Ovary (tissue), 10 donors: ENCODE measurements at regions of chr16 and their contacts with region 1.

Region 1: GRCh38 chr16:2500918-2501750 is 12.6 kb upstream of the ATP6V0C start:
- DNase-seq: peak; percentile 82 to 93 (median 87)
- H3K4me3 ChIP-seq: peak overlapping the region; percentile 1
- H3K27ac ChIP-seq: peak overlapping the region in 1 of 2 donors; percentile 73
- H3K4me1 ChIP-seq: peaks cover 5% of the 10 kb centered on the region
- H3K27me3 ChIP-seq: no peaks in the 10 kb centered on the region
- CTCF ChIP-seq: peak; percentile 98
- EP300 ChIP-seq: no peak
- POLR2A ChIP-seq: no peak

Region 2: DNA sequence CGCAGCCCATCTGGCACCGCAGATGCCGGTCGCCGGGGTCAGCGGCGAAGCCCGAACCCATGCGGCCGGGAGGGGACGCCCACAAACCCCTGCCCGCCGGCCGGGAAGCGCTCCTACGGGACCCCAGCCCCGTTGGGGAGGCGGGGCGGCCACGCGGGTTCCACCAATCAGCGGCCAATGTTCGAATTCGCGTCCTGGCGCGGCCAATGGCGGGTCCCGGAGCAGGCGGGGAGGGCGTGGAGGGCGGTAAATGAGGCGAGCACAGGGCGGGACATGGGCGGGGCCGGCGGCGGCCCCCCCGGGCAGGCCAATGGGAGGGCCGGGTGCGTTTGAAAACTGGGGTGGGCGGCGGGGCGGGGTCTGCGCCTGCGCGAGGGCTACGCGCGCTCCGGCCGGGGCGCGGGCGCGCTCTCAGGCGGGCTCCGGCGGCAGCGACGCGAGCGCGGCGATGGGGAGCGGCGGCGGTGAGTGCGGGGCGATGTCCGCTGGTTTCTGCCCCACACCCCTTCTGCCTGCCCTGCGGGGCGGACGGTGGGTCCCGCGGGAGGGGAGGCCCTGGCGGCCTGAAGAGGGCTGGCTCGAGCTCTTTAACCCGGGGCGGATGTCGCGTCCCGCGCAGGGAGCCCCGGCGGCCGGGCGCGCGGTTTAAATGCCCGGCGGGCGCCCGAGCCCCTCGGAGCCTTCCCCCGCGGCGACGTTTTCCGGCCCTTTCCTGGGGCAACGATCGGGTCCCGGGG is 71.9 kb before region 1 on chr16 and contains the start of gene CCNF:
- intact Hi-C with region 1: loop called in 2 of 4 experiments (anchors 10 kb)
- DNase-seq: peak; percentile 97 to 99 (median 98)
- H3K4me3 ChIP-seq: peak within 1 kb of the TSS; percentile 61
- H3K27ac ChIP-seq: peak within 1 kb of the TSS; percentile 57 to 89
- H3K4me1 ChIP-seq: peaks cover 2% of the 10 kb centered on the region
- H3K27me3 ChIP-seq: no peaks in the 10 kb centered on the region
- CTCF ChIP-seq: peak in 2 of 3 donors; percentile 16 to 29
- EP300 ChIP-seq: no peak
- POLR2A ChIP-seq: peak; percentile 86
- total RNA-seq, gene CCNF: 1.4 to 2.5 (median 2.0) TPM

Region 3: GRCh38 chr16:2686912-2687507 is 185.9 kb after region 1 on chr16:
- intact Hi-C with region 1: no loop called
- DNase-seq: peak in 1 of 5 donors; percentile 25
- H3K4me3 ChIP-seq: no peak overlapping the region
- H3K27ac ChIP-seq: no peak overlapping the region
- H3K4me1 ChIP-seq: peaks cover 4% of the 10 kb centered on the region
- H3K27me3 ChIP-seq: no peaks in the 10 kb centered on the region
- CTCF ChIP-seq: no peak
- EP300 ChIP-seq: no peak
- POLR2A ChIP-seq: no peak